ENCODE measurements at regions of chr9 and their contacts with region 1.

Region 1: DNA sequence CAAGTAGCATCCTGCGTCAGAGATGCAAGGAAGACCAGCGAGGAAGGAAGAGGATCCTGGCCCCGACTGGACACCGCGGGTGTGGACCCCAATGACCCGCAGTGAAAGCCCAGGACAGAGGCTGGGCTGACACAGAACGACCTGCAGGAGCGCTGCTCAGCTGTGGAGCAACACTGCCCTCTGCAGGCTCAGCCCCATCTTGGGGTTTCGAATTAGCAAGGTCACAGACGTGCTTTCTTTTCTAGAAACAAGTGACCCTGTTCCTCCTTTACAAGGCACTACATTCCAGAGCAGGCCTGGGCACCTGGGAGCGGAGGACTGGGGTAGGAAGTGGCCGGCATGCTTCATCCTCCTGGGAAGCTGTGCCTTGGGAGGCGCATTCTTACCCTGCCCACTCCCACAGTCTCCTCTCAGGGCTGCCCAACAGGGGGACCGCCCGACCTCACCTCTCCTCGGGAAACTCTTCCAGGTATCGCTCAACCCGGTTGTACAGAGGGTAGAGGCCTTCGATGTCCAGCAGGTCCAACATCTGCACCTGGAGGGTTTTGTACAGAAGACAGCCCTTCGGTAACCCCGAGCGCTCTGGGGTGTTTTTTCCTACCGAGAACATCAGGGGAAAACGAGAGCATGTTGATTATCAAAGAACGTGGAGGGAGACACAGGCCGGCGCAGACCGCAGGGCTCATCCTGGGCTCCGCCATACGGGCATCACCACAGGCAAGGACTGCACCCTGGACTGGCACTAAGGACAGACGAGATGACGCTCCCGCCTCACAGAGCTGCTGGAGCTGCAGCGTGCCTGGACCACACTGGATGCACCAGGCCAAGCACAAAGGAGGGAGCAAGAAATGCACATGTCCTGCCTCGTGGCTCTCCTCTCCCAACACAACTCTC is 35.0 kb downstream of the IPPK start:
- DNase-seq: peak; percentile 42 to 84 (median 72)
- ATAC-seq: peak; percentile 72 to 97 (median 94)
- H3K4me3 ChIP-seq: no peak overlapping the region
- H3K27ac ChIP-seq: no peak overlapping the region
- H3K4me1 ChIP-seq: no peaks in the 10 kb centered on the region
- H3K27me3 ChIP-seq: no peaks in the 10 kb centered on the region
- CTCF ChIP-seq: peak; percentile 63 to 80 (median 70)

Region 2: GRCh38 chr9:92138157-92138959 is 496.6 kb before region 1 on chr9:
- intact Hi-C with region 1: loop called in 2 of 3 experiments (anchors 5 kb)
- DNase-seq: peak in 4 of 6 donors; percentile 34 to 93 (median 72)
- ATAC-seq: peak; percentile 55 to 63 (median 60)
- H3K4me3 ChIP-seq: no peak overlapping the region
- H3K27ac ChIP-seq: no peak overlapping the region
- H3K4me1 ChIP-seq: peaks cover 0 to 6% (median 0%) of the 10 kb centered on the region in 3 donors
- H3K27me3 ChIP-seq: peaks cover 0 to 4% (median 0%) of the 10 kb centered on the region in 4 donors
- CTCF ChIP-seq: peak; percentile 83 to 93 (median 84)

Region 3: GRCh38 chr9:92538541-92538940 is 96.4 kb before region 1 on chr9:
- intact Hi-C with region 1: no loop called
- DNase-seq: no peak
- ATAC-seq: no peak
- H3K4me3 ChIP-seq: no peak overlapping the region
- H3K27ac ChIP-seq: no peak overlapping the region
- H3K4me1 ChIP-seq: peaks cover 0 to 8% (median 7%) of the 10 kb centered on the region in 3 donors
- H3K27me3 ChIP-seq: no peaks in the 10 kb centered on the region
- CTCF ChIP-seq: no peak

Region 4: DNA sequence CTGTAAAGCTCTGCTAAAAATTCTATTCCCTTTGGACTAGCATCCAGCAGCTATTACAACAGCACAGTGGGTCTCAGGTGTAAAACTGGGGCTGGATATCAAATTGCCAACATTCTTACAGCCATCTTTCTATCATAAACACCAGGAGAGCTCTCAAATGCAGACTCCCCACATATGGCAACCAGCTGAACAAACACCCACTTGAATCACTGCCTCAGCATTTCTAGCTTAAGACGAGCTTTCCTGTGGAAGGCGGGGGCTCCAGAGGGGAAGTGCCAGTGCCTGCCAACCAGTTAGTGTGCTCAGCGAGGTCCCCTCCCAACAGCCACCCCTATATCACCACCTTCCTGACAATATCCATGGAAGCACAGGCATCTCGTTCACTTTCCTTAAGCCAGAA is 27.2 kb before region 1 on chr9:
- intact Hi-C with region 1: no loop called
- DNase-seq: peak in 1 of 6 donors; percentile 29
- ATAC-seq: peak; percentile 49 to 66 (median 62)
- H3K4me3 ChIP-seq: no peak overlapping the region
- H3K27ac ChIP-seq: no peak overlapping the region
- H3K4me1 ChIP-seq: peaks cover 0 to 9% (median 0%) of the 10 kb centered on the region in 3 donors
- H3K27me3 ChIP-seq: no peaks in the 10 kb centered on the region
- CTCF ChIP-seq: no peak

Region 5: DNA sequence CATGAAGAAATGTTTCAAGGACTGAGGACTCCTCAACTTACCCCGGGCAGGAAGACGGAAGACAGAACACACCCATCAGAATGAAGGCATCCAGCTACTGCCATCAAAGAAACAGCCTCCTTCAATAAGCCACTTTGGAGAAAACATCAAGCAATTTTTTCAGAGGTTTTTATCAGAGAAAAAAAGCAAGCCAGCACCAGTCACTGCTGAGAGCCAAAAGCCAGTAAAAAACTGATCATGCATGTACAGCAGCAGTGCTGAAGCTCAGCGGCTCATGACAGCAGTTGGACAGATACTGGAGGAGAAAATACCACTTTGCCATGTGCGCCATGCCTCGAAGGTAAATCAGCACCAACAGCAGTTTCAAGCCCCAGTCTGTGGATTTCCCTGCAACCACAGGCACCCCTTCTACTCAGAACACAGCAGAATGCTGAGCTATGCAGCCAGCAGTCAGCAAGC is 252.9 kb after region 1 on chr9:
- intact Hi-C with region 1: no loop called
- DNase-seq: no peak
- ATAC-seq: no peak
- H3K4me3 ChIP-seq: no peak overlapping the region
- H3K27ac ChIP-seq: no peak overlapping the region
- H3K4me1 ChIP-seq: no peaks in the 10 kb centered on the region
- H3K27me3 ChIP-seq: no peaks in the 10 kb centered on the region
- CTCF ChIP-seq: no peak

Measured in pancreas (tissue), 10 donors.